SK-N-SH (cell line): ENCODE measurements at regions of chr20 and their contacts with region 1.

Region 1: DNA sequence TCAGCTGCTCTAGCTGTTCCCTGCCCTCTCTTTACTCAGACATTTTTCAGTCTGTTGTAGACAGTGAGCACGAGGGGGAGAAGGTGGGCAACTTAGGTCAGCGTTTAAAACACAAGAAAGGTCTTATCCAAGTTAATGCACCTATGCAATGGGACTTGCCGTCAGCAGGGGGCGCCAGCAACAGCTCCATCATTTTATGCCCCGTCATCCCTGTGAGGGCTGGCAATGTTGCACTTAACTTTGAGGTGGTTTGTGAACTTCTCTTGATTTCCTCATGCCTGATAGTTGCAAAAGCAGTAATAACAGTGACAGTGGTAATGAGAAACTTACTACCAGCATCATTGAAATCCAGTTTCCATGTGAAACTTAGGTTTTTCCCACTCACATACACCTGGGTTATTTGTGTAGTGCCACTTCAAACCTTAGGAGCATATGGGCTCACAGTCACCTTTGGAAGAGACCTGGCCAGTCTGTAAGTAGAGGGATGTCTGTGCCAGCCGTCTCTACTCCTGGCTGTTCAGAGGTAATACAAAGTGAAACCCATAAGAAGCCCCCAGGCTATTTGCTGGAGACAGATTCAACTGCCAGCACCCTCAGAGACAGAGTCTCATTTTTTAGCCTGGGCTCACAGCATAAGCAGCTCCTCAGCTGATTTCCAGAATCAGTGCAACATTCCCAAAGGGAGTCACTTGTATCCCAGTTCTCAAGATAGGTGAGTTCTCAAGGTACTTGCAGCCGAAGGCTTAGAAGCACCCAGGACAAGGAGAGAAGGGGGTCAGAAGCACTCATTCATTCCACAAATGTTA is 44.8 kb upstream of the ID1 start:
- DNase-seq: peak; percentile 68
- H3K4me3 ChIP-seq: peak overlapping the region in 1 of 2 experiments; percentile 54; a peak in 1 of 4 replicates
- H3K27ac ChIP-seq: peak overlapping the region; percentile 73 to 96
- H3K4me1 ChIP-seq: peaks cover 15 to 33% of the 10 kb centered on the region in 2 experiments
- H3K27me3 ChIP-seq: no peaks in the 10 kb centered on the region
- CTCF ChIP-seq: peak; percentile 98
- EP300 ChIP-seq: no peak
- RAD21 ChIP-seq: peak; percentile 55

Region 2: GRCh38 chr20:31547017-31547675 is 13.2 kb before region 1 on chr20:
- CTCF ChIA-PET with region 1: interaction called, 177 read pairs
- POLR2A ChIA-PET with region 1: no interaction called
- DNase-seq: peak; percentile 76
- H3K4me3 ChIP-seq: peak overlapping the region; percentile 42 to 54
- H3K27ac ChIP-seq: peak overlapping the region; percentile 84 to 96
- H3K4me1 ChIP-seq: peaks cover 21 to 35% of the 10 kb centered on the region in 2 experiments; a peak in 3 of 4 replicates
- H3K27me3 ChIP-seq: no peaks in the 10 kb centered on the region
- CTCF ChIP-seq: no peak
- EP300 ChIP-seq: no peak
- RAD21 ChIP-seq: no peak

Region 3: GRCh38 chr20:31572701-31573554 is 12.6 kb after region 1 on chr20:
- CTCF ChIA-PET with region 1: interaction called, 155 read pairs
- POLR2A ChIA-PET with region 1: interaction called, 9 read pairs
- DNase-seq: peak; percentile 93
- H3K4me3 ChIP-seq: peak overlapping the region; percentile 52 to 59
- H3K27ac ChIP-seq: peak overlapping the region; percentile 93 to 97
- H3K4me1 ChIP-seq: peaks cover 45 to 48% of the 10 kb centered on the region in 2 experiments
- H3K27me3 ChIP-seq: no peaks in the 10 kb centered on the region
- CTCF ChIP-seq: no peak
- EP300 ChIP-seq: peak; percentile 63 to 94
- RAD21 ChIP-seq: no peak; the same call in 1 of the 2 replicates

Region 4: DNA sequence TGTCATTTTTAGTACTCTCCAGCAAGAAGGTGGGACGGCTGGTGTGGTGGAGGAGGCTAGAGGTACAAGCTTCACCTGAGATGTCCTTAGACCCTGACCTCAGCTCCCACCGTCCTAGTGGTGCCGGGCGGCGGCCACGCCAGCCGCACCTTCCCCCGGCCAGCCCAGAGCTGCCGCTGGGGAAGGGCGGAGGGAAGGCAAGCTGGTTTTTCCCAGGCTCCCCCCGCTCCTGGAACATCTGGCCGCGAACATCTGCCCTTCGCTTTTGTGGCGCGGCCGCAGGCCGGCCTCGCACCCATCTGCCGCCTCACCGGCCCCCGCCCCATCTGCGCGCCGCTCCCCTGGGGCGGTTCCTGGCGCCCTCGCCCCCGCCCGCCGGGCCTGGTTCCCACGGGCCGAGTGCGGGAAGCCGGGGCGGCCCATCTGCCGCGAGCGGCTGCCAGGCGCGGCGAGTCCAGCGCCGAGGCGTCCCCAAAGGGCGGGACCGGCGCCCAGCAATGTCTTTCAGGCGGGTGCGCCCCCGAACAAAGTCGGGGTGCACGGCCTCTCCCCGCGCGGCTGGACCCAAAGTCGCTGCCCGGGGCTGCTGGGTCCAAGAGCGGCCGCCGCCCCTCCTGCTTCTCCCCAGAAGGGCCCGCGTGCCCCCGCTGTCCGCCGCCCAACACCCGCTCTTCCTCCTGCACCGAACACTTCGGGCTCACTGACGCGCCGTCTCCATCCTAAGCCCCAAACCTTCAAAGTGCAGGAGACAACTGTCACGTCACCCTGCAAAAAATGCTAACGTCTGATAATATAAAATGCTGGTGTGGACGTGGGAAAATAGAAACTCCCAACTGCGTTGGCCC is 27.5 kb after region 1 on chr20:
- CTCF ChIA-PET with region 1: interaction called, 12 read pairs
- POLR2A ChIA-PET with region 1: no interaction called
- DNase-seq: peak; percentile 77
- H3K4me3 ChIP-seq: no peak overlapping the region; a peak in 1 of 4 replicates
- H3K27ac ChIP-seq: no peak overlapping the region
- H3K4me1 ChIP-seq: no peaks in the 10 kb centered on the region; a peak in 1 of 4 replicates
- H3K27me3 ChIP-seq: no peaks in the 10 kb centered on the region
- CTCF ChIP-seq: no peak
- EP300 ChIP-seq: no peak
- RAD21 ChIP-seq: no peak

Region 5: DNA sequence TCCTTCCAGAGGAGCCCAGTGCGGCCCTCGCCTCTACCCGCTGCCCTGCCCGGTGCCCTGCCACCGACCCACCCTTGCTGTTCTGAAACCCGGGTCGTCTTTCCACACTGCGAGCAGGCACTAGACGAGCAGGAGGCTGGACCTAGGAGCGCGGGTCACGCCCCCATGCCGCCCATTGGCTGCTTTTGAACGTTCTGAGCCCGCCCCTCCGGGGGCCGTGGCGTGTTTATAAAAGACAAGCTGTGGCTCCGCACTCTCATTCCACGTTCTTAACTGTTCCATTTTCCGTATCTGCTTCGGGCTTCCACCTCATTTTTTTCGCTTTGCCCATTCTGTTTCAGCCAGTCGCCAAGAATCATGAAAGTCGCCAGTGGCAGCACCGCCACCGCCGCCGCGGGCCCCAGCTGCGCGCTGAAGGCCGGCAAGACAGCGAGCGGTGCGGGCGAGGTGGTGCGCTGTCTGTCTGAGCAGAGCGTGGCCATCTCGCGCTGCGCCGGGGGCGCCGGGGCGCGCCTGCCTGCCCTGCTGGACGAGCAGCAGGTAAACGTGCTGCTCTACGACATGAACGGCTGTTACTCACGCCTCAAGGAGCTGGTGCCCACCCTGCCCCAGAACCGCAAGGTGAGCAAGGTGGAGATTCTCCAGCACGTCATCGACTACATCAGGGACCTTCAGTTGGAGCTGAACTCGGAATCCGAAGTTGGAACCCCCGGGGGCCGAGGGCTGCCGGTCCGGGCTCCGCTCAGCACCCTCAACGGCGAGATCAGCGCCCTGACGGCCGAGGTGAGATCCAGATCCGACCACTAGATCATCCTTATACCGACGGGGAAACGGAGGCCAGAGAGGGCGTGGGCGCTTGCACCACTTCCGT is 45.0 kb after region 1 on chr20 and contains the start of gene ID1:
- CTCF ChIA-PET with region 1: interaction called, 1,802 read pairs
- POLR2A ChIA-PET with region 1: interaction called, 13 read pairs
- DNase-seq: peak; percentile 92
- H3K4me3 ChIP-seq: peak within 1 kb of the TSS; percentile 80 to 96
- H3K27ac ChIP-seq: peak within 1 kb of the TSS; percentile 97 to 100
- H3K4me1 ChIP-seq: peaks cover 22 to 31% of the 10 kb centered on the region in 2 experiments
- H3K27me3 ChIP-seq: no peaks in the 10 kb centered on the region
- CTCF ChIP-seq: no peak
- EP300 ChIP-seq: 0 out of 4 replicates have a peak, but pooled peaks of 1 of the 2 experiments have one; percentile 6
- RAD21 ChIP-seq: no peak
- polyA plus RNA-seq, gene ID1: 324 and 493 TPM in 2 replicates

Region 6: GRCh38 chr20:31630187-31630790 is 70.0 kb after region 1 on chr20:
- CTCF ChIA-PET with region 1: interaction called, 1,802 read pairs
- POLR2A ChIA-PET with region 1: no interaction called
- DNase-seq: no peak
- H3K4me3 ChIP-seq: no peak overlapping the region
- H3K27ac ChIP-seq: peak overlapping the region in 1 of 2 experiments; percentile 16; a peak in 1 of 4 replicates
- H3K4me1 ChIP-seq: peaks cover 0 to 6% of the 10 kb centered on the region in 2 experiments; a peak in 1 of 4 replicates
- H3K27me3 ChIP-seq: no peaks in the 10 kb centered on the region
- CTCF ChIP-seq: no peak
- EP300 ChIP-seq: no peak
- RAD21 ChIP-seq: no peak

Region 7: GRCh38 chr20:31652917-31653396 is 92.7 kb after region 1 on chr20:
- CTCF ChIA-PET with region 1: interaction called, 44 read pairs
- POLR2A ChIA-PET with region 1: interaction called, 3 read pairs
- DNase-seq: peak; percentile 67
- H3K4me3 ChIP-seq: no peak overlapping the region
- H3K27ac ChIP-seq: peak overlapping the region; percentile 34 to 86; a peak in 3 of 4 replicates
- H3K4me1 ChIP-seq: peaks cover 12 to 23% of the 10 kb centered on the region in 2 experiments; a peak in 3 of 4 replicates
- H3K27me3 ChIP-seq: no peaks in the 10 kb centered on the region
- CTCF ChIP-seq: no peak
- EP300 ChIP-seq: peak in 1 of 2 experiments; percentile 95; a peak in 2 of 4 replicates
- RAD21 ChIP-seq: no peak; the same call in 1 of the 2 replicates